CD4-positive, alpha-beta T cell (primary cell): ENCODE measurements at regions of chr3 and their contacts with region 1.

Region 1: DNA sequence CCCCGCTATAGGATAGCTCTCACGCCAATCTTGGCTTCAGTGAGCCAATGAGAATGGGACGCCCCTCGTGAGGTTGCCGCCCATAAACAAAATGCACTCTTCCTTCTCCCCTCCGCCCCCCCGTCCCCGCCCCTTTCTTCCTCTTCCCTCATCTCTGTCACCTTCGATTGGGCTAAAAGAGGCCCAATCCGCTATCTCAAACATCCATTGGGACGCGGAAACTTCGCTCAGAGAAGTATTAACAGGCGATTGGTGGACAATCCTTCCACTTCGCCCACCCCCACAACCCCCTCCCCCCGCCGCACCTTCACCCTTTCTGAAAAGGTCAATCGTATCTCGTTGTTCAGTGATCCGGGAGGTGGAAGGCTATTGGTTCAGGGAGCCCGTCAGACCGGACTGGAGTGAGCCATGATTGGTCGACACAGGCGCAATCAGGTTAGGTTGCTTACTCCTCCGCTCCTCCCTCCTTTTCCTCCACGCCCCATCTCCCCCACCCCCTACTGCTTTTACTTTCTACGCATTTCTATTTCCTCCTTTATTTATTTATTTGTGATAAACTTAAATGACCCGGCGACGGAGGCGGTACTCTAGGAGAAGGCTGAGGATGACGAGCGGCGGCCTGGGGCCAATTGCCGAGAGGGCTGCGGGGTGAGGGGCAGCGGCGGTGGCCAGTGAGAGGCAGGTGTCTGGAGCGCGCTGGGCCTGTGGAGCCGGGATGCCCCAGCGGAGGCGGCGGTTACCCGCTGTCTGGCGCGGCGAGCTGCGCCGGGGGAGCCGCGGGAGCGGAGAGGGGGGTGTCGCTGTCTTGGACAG is 447 bp upstream of the ZBTB20 start:
- DNase-seq: peak; percentile 89 to 99 (median 96)
- ATAC-seq: peak; percentile 72
- H3K4me3 ChIP-seq: peak overlapping the region; percentile 90
- H3K4me3 Mint-ChIP-seq: peak overlapping the region; percentile 94
- H3K27ac ChIP-seq: peak overlapping the region; percentile 91 to 97
- H3K27ac Mint-ChIP-seq: peak overlapping the region; percentile 94
- H3K4me1 ChIP-seq: peaks cover 14% of the 10 kb centered on the region
- H3K4me1 Mint-ChIP-seq: peaks cover 31% of the 10 kb centered on the region
- H3K27me3 ChIP-seq: no peaks in the 10 kb centered on the region
- H3K27me3 Mint-ChIP-seq: no peaks in the 10 kb centered on the region
- CTCF ChIP-seq: no peak

Region 2: GRCh38 chr3:113696658-113697499 is 1450.7 kb before region 1 on chr3:
- CTCF ChIA-PET with region 1: no interaction called
- POLR2A ChIA-PET with region 1: interaction called, 4 read pairs
- intact Hi-C with region 1: loop called (anchors 2 to 5 kb)
- DNase-seq: peak; percentile 96 to 100 (median 98)
- ATAC-seq: peak; percentile 87
- H3K4me3 ChIP-seq: peak overlapping the region; percentile 78
- H3K4me3 Mint-ChIP-seq: no peak overlapping the region
- H3K27ac ChIP-seq: peak overlapping the region; percentile 87
- H3K27ac Mint-ChIP-seq: no peak overlapping the region
- H3K4me1 ChIP-seq: peaks cover 23% of the 10 kb centered on the region
- H3K4me1 Mint-ChIP-seq: peaks cover 23% of the 10 kb centered on the region
- H3K27me3 ChIP-seq: no peaks in the 10 kb centered on the region
- H3K27me3 Mint-ChIP-seq: no peaks in the 10 kb centered on the region
- CTCF ChIP-seq: no peak

Region 3: GRCh38 chr3:114056130-114057010 is 1091.2 kb before region 1 on chr3 and contains the starts of genes CCDC191 and QTRT2:
- CTCF ChIA-PET with region 1: no interaction called
- POLR2A ChIA-PET with region 1: no interaction called
- intact Hi-C with region 1: loop called in 1 of 2 experiments (anchors 10 kb)
- DNase-seq: peak; percentile 93 to 100 (median 97)
- ATAC-seq: peak; percentile 95
- H3K4me3 ChIP-seq: peak within 1 kb of the TSS; percentile 88
- H3K4me3 Mint-ChIP-seq: peak within 1 kb of the TSS; percentile 95
- H3K27ac ChIP-seq: peak within 1 kb of the TSS; percentile 87 to 96
- H3K27ac Mint-ChIP-seq: peak within 1 kb of the TSS; percentile 94
- H3K4me1 ChIP-seq: peaks cover 18% of the 10 kb centered on the region
- H3K4me1 Mint-ChIP-seq: peaks cover 53% of the 10 kb centered on the region
- H3K27me3 ChIP-seq: no peaks in the 10 kb centered on the region
- H3K27me3 Mint-ChIP-seq: no peaks in the 10 kb centered on the region
- CTCF ChIP-seq: no peak
- total RNA-seq, gene CCDC191: 3.6 to 3.7 TPM
- total RNA-seq, gene QTRT2: 22.8 to 27.0 TPM

Region 4: GRCh38 chr3:115019900-115020299 is 127.6 kb before region 1 on chr3:
- CTCF ChIA-PET with region 1: no interaction called
- POLR2A ChIA-PET with region 1: no interaction called
- intact Hi-C with region 1: no loop called
- DNase-seq: no peak
- ATAC-seq: no peak
- H3K4me3 ChIP-seq: no peak overlapping the region
- H3K4me3 Mint-ChIP-seq: no peak overlapping the region
- H3K27ac ChIP-seq: no peak overlapping the region
- H3K27ac Mint-ChIP-seq: no peak overlapping the region
- H3K4me1 ChIP-seq: no peaks in the 10 kb centered on the region
- H3K4me1 Mint-ChIP-seq: no peaks in the 10 kb centered on the region
- H3K27me3 ChIP-seq: no peaks in the 10 kb centered on the region
- H3K27me3 Mint-ChIP-seq: no peaks in the 10 kb centered on the region
- CTCF ChIP-seq: no peak

Region 5: GRCh38 chr3:115092220-115092791 is 55.2 kb before region 1 on chr3:
- CTCF ChIA-PET with region 1: interaction called, 7 read pairs
- POLR2A ChIA-PET with region 1: interaction called, 19 read pairs
- intact Hi-C with region 1: no loop called
- DNase-seq: peak; percentile 14 to 79 (median 56)
- ATAC-seq: peak; percentile 67
- H3K4me3 ChIP-seq: no peak overlapping the region
- H3K4me3 Mint-ChIP-seq: no peak overlapping the region
- H3K27ac ChIP-seq: no peak overlapping the region
- H3K27ac Mint-ChIP-seq: no peak overlapping the region
- H3K4me1 ChIP-seq: no peaks in the 10 kb centered on the region
- H3K4me1 Mint-ChIP-seq: peaks cover 68% of the 10 kb centered on the region
- H3K27me3 ChIP-seq: no peaks in the 10 kb centered on the region
- H3K27me3 Mint-ChIP-seq: no peaks in the 10 kb centered on the region
- CTCF ChIP-seq: peak; percentile 81

Region 6: DNA sequence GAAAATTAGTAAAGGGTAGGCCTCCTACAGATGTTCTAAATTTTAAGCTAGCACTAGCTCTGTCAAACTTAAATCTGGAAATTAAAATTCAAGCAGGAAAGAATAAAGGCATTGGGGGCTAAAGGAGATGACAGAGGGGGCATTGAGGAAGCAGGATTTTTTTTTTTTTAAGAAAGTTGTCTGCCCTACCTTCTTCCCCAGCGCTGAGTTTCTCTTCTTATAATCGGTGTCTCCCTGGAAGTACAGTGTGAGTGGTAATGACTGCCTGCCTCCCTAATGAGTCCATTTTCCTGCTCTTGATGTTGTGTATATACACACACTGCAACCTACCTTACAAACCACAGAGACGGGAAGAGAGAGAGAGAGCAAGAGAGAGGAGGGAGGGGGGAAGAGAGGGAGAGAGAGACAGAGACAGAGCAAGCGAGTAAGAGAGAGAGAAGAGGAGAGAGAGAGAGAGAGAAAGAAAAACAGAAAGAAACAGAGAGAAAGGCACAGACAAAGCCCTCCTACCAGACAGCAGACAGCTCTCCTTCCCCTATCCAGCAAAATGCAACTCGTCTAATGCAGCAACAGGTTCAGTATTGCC is 47.5 kb before region 1 on chr3:
- CTCF ChIA-PET with region 1: interaction called, 7 read pairs
- POLR2A ChIA-PET with region 1: interaction called, 135 read pairs
- intact Hi-C with region 1: loop called (anchors 1 to 2 kb)
- DNase-seq: peak in 9 of 14 experiments; percentile 3 to 82 (median 28)
- ATAC-seq: peak; percentile 87
- H3K4me3 ChIP-seq: peak overlapping the region; percentile 46
- H3K4me3 Mint-ChIP-seq: peak overlapping the region; percentile 89
- H3K27ac ChIP-seq: peak overlapping the region in 1 of 2 donors; percentile 3
- H3K27ac Mint-ChIP-seq: peak overlapping the region; percentile 86
- H3K4me1 ChIP-seq: peaks cover 2% of the 10 kb centered on the region
- H3K4me1 Mint-ChIP-seq: peaks cover 66% of the 10 kb centered on the region
- H3K27me3 ChIP-seq: no peaks in the 10 kb centered on the region
- H3K27me3 Mint-ChIP-seq: no peaks in the 10 kb centered on the region
- CTCF ChIP-seq: no peak

Region 7: DNA sequence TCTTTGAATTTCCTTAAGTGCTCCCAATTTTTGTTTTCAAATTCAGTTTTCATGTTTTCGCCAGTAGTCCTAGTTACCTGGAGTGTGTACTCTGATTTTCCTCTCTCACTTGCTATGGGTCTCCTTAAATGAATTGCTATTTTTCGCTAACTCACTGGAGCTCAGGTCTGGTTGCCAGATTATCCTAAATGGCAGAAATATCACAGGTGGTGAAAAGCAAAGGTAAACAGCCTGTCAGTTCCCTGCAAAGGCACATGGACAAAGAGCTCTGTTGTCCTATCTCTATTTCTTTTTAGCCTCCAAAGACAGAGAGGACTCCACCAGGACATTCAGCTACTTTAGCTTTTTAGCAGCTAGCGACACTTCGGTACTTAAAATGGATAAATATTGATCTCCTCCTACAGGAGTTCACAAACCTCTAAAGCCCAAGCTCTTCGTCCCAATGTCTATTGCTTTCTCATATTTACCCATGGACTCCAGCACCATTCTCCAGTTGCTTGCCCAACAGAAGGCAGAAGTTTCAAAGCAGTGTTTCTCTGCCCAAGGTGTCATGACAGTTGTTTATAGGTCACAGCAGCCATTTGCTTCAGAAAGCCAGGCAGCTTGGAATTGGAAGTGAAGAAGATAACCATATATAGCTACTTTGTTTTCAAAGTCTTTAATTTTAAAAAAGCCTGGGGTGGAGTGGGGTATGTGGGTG is 12.7 kb before region 1 on chr3:
- CTCF ChIA-PET with region 1: interaction called, 5 read pairs
- POLR2A ChIA-PET with region 1: interaction called, 34 read pairs
- intact Hi-C with region 1: no loop called
- DNase-seq: no peak
- ATAC-seq: no peak
- H3K4me3 ChIP-seq: no peak overlapping the region
- H3K4me3 Mint-ChIP-seq: no peak overlapping the region
- H3K27ac ChIP-seq: no peak overlapping the region
- H3K27ac Mint-ChIP-seq: no peak overlapping the region
- H3K4me1 ChIP-seq: no peaks in the 10 kb centered on the region
- H3K4me1 Mint-ChIP-seq: no peaks in the 10 kb centered on the region
- H3K27me3 ChIP-seq: no peaks in the 10 kb centered on the region
- H3K27me3 Mint-ChIP-seq: no peaks in the 10 kb centered on the region
- CTCF ChIP-seq: no peak

Region 8: DNA sequence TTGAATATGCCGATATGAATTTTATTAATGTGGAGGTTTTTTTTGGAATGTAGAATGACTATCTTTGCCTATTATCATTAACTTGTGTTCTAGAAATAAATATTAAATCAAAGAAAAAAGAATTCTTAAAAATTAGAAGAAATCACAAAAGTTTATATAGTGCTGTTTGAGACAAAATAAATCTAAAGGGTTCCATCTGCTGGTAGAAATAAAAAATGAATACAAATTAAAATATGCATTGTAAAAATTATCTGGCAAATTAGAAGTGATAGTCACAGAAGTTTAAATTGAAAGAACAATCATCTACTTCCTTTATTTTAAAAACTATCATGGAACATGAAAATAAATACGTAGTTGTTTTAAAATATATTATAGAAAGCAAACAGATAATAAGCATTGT is 22.3 kb after region 1 on chr3:
- CTCF ChIA-PET with region 1: interaction called, 12 read pairs
- POLR2A ChIA-PET with region 1: interaction called, 188 read pairs
- intact Hi-C with region 1: loop called (anchors 1 to 2 kb)
- DNase-seq: peak in 2 of 14 experiments; percentile 29 to 41
- ATAC-seq: no peak
- H3K4me3 ChIP-seq: no peak overlapping the region
- H3K4me3 Mint-ChIP-seq: no peak overlapping the region
- H3K27ac ChIP-seq: no peak overlapping the region
- H3K27ac Mint-ChIP-seq: no peak overlapping the region
- H3K4me1 ChIP-seq: peaks cover 11% of the 10 kb centered on the region
- H3K4me1 Mint-ChIP-seq: peaks cover 13% of the 10 kb centered on the region
- H3K27me3 ChIP-seq: no peaks in the 10 kb centered on the region
- H3K27me3 Mint-ChIP-seq: no peaks in the 10 kb centered on the region
- CTCF ChIP-seq: peak; percentile 73